ENCODE measurements at regions of chr16 and their contacts with region 1.

Region 1: GRCh38 chr16:11224096-11224893 is 31.7 kb downstream of the SOCS1 start:
- DNase-seq: peak; percentile 23 to 92 (median 50)
- ATAC-seq: peak; percentile 51
- H3K4me3 ChIP-seq: peak overlapping the region; percentile 51
- H3K4me3 Mint-ChIP-seq: peak overlapping the region; percentile 84
- H3K27ac ChIP-seq: peak overlapping the region; percentile 91 to 92
- H3K27ac Mint-ChIP-seq: peak overlapping the region; percentile 99
- H3K4me1 ChIP-seq: peaks cover 46% of the 10 kb centered on the region
- H3K4me1 Mint-ChIP-seq: peaks cover 38% of the 10 kb centered on the region
- H3K27me3 ChIP-seq: no peaks in the 10 kb centered on the region
- H3K27me3 Mint-ChIP-seq: no peaks in the 10 kb centered on the region
- CTCF ChIP-seq: no peak

Region 2: DNA sequence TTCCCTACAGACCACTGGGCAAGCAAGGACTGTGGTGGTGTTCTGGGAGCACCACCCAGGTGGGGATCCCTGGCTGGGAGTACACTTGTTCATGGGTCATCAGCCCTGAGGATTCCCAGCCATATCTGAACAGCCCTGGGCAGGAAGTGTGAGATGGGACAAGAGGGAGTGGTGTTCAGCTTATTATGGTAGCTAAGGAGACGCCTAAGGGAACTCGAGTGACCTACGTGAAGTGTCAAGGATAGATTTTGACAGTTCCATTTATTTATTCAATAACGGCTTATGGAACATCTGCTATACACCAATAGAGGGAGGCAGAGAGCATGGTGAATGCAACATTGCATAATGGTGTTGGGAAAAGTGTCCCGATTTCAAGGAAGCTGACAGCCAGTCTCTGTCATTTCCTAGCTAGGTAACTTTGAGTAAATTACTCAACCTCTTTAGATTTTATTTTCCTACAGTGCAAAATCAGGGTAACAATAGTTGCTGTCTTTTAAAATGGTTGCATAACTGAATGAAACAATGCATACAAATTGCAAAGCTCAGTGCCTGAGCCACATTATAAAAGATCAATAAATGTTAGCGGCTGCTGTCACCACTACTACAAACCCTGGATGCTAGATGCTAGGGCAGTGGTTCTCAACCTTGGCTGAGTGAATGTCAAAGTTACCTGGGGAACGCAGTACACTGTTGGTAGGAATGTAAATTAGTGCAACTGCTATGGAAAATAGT is 1576.1 kb before region 1 on chr16:
- CTCF ChIA-PET with region 1: no interaction called
- POLR2A ChIA-PET with region 1: no interaction called
- intact Hi-C with region 1: no loop called
- DNase-seq: no peak
- ATAC-seq: no peak
- H3K4me3 ChIP-seq: no peak overlapping the region
- H3K4me3 Mint-ChIP-seq: no peak overlapping the region
- H3K27ac ChIP-seq: no peak overlapping the region
- H3K27ac Mint-ChIP-seq: no peak overlapping the region
- H3K4me1 ChIP-seq: no peaks in the 10 kb centered on the region
- H3K4me1 Mint-ChIP-seq: no peaks in the 10 kb centered on the region
- H3K27me3 ChIP-seq: no peaks in the 10 kb centered on the region
- H3K27me3 Mint-ChIP-seq: no peaks in the 10 kb centered on the region
- CTCF ChIP-seq: no peak

Region 3: DNA sequence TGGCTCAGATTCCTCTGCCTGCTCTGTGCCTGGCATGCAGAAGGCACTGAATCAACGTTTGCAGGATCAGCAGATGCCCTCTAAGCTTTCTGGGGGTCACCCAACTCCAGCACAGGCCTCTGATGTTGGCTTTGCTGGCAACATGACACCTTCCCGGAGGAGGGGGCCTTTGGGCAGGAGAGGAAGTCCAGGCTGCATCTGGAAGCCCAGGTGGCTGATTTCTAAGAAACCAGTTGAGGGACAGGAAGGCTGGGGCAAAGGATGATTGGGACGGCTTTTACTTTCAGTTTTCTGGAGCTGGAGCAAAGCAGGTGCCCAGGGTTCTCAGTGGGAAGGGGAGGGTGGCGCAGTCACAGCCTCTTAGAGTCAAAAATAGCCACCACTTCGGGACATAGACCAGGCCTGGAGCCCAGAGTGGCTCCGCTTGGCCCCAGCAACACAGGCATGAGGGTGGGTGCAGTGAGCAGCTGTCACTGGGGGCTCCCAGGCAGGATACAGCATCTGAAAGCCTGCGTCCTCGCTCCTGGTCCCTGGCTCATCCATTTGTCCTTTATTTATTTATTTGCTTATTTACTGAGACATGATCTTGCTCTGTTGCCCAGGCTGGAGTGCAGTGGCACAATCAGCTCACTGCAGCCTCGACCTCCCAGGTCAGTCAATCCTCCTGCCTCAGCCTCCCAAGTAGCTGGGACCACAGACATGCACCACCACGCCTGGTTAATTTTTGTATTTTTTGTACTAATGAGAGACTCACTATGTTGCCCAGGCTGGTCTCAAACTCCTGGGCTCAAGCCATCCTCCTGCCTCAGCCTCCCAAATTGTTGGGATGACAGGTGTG is 16.6 kb after region 1 on chr16:
- CTCF ChIA-PET with region 1: no interaction called
- POLR2A ChIA-PET with region 1: interaction called, 13 read pairs
- intact Hi-C with region 1: no loop called
- DNase-seq: peak in 2 of 14 experiments; percentile 29 to 60
- ATAC-seq: no peak
- H3K4me3 ChIP-seq: no peak overlapping the region
- H3K4me3 Mint-ChIP-seq: peak overlapping the region; percentile 34
- H3K27ac ChIP-seq: no peak overlapping the region
- H3K27ac Mint-ChIP-seq: peak overlapping the region; percentile 20
- H3K4me1 ChIP-seq: peaks cover 19% of the 10 kb centered on the region
- H3K4me1 Mint-ChIP-seq: peaks cover 13% of the 10 kb centered on the region
- H3K27me3 ChIP-seq: no peaks in the 10 kb centered on the region
- H3K27me3 Mint-ChIP-seq: no peaks in the 10 kb centered on the region
- CTCF ChIP-seq: no peak